CD14-positive monocyte (primary cell): ENCODE measurements at regions of chr16 and their contacts with region 1.

Region 1: DNA sequence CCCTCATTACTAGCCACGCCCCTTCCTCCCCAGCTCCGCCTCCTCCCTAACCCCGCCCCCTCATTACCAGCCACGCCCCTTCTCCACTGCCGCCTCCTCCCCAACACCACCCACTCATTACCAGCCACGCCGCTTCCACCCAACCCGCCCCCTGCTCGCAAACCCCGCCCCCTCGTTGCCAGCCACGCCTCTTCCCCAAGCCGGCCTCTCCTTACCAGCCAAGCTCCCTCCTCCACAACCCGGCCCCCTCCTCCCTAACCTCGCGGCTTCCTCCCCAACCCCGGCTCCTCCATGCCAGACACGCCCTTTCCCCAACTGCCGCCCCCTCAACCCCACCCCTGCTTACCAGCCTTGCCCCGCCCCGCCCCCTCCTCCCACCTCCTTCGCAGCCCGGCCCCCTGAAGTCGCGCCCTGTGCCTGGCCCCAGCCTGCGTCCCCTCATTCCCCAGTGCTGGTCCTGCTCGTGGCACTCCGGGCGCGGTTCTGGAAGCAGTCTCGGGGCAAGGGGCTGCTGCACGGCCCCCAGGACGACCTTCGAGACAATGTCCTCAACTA is 7.2 kb downstream of the SLC22A31 start:
- DNase-seq: peak in 2 of 3 donors; percentile 26 to 54
- H3K4me3 ChIP-seq: no peak overlapping the region
- H3K4me3 Mint-ChIP-seq: no peak overlapping the region
- H3K27ac ChIP-seq: no peak overlapping the region
- H3K27ac Mint-ChIP-seq: no peak overlapping the region
- H3K4me1 ChIP-seq: peaks cover 5 to 8% of the 10 kb centered on the region in 2 donors
- H3K4me1 Mint-ChIP-seq: no peaks in the 10 kb centered on the region
- H3K27me3 ChIP-seq: peaks cover 0 to 16% of the 10 kb centered on the region in 2 donors
- H3K27me3 Mint-ChIP-seq: peaks cover 17 to 30% (median 27%) of the 10 kb centered on the region in 3 donors
- CTCF ChIP-seq: no peak

Region 2: GRCh38 chr16:88452482-88453216 is 740.4 kb before region 1 on chr16:
- intact Hi-C with region 1: loop called in 1 of 2 experiments (anchors 5 kb)
- DNase-seq: peak; percentile 91 to 95 (median 94)
- H3K4me3 ChIP-seq: peak overlapping the region; percentile 38 to 83 (median 65)
- H3K4me3 Mint-ChIP-seq: peak overlapping the region; percentile 79 to 87
- H3K27ac ChIP-seq: peak overlapping the region; percentile 58 to 75
- H3K27ac Mint-ChIP-seq: peak overlapping the region; percentile 57 to 94 (median 82)
- H3K4me1 ChIP-seq: peaks cover 46 to 60% of the 10 kb centered on the region in 2 donors
- H3K4me1 Mint-ChIP-seq: peaks cover 44% of the 10 kb centered on the region
- H3K27me3 ChIP-seq: peaks cover 27 to 59% of the 10 kb centered on the region in 2 donors
- H3K27me3 Mint-ChIP-seq: peaks cover 52 to 86% (median 57%) of the 10 kb centered on the region in 3 donors
- CTCF ChIP-seq: no peak

Region 3: DNA sequence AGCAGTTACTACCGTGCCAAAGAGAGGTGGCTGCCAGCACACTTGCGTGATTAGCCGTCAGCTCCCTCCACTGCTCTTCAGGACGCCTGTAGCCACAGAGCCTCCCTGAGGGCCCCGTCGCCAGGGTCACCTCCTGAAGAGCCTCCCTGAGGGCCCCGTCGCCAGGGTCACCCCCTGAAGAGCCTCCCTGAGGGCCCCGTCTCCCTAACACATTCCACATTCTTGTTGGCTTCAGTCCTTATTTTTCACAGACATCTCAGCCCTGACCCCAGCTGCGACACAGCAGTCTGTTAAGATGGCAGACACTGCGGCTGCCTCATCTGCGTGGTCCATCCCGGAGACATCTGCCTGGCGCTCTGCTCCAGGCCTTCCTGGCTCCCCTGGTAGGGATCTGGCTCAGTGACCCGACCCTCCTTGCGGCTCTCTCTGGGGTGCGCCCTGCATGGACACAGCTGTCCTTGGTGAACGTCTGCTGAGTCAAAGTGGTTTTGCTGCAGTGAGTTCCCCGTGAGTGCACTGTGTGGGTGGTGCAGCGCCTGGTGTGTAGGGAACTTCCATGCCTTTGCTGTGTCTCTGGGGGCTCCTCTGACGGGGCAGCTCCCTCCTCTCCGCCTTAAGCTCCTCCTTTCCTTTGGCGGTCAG is 88.0 kb before region 1 on chr16:
- intact Hi-C with region 1: loop called in 1 of 2 experiments (anchors 10 kb)
- DNase-seq: no peak
- H3K4me3 ChIP-seq: no peak overlapping the region
- H3K4me3 Mint-ChIP-seq: no peak overlapping the region
- H3K27ac ChIP-seq: no peak overlapping the region
- H3K27ac Mint-ChIP-seq: peak overlapping the region in 1 of 7 donors; percentile 34
- H3K4me1 ChIP-seq: peaks cover under 1 to 8% of the 10 kb centered on the region in 2 donors
- H3K4me1 Mint-ChIP-seq: peaks cover 11% of the 10 kb centered on the region
- H3K27me3 ChIP-seq: no peaks in the 10 kb centered on the region
- H3K27me3 Mint-ChIP-seq: peaks cover 0 to 2% (median 1%) of the 10 kb centered on the region in 3 donors
- CTCF ChIP-seq: no peak

Region 4: GRCh38 chr16:89150090-89150835 is 42.8 kb before region 1 on chr16:
- intact Hi-C with region 1: no loop called
- DNase-seq: no peak
- H3K4me3 ChIP-seq: no peak overlapping the region
- H3K4me3 Mint-ChIP-seq: no peak overlapping the region
- H3K27ac ChIP-seq: no peak overlapping the region
- H3K27ac Mint-ChIP-seq: peak overlapping the region in 3 of 7 donors; percentile 2 to 57 (median 37)
- H3K4me1 ChIP-seq: no peaks in the 10 kb centered on the region
- H3K4me1 Mint-ChIP-seq: peaks cover 6% of the 10 kb centered on the region
- H3K27me3 ChIP-seq: no peaks in the 10 kb centered on the region
- H3K27me3 Mint-ChIP-seq: peaks cover 1 to 8% (median 5%) of the 10 kb centered on the region in 3 donors
- CTCF ChIP-seq: no peak

Region 5: DNA sequence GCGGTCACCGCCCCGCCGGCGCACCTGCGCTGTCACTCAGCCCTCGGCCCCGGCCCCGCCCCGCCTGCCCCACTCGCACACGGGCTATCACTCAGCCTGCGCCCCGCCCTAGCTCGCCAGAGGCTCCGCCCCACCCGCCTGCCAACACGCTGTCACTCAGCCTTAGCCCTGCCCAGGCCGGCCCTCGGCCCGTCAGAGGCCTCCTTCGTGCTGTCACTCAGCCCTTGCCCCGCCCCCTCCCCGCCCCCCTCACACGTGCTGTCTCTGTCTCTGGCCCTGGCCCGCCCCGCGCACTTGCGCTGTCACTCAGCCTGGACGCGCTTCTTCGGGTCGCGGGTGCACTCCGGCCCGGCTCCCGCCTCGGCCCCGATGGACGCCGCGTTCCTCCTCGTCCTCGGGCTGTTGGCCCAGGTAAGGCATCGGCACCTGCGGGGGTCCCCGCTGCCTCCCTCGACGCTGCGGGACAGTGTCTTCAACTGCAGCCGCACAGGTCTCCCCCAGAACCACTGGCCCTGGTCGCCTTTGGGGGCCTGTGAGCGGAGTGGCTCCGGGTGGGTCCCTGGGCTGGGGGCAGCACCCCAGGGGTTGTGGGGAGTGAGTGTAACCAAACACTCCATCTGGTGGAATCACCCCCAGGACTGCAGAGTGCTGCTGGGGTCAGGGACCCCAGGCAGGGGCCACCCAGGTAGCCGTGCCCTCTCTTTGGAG is 21.5 kb before region 1 on chr16 and contains the start of gene CDH15:
- intact Hi-C with region 1: loop called in 1 of 2 experiments (anchors 2 kb)
- DNase-seq: peak; percentile 88 to 95 (median 95)
- H3K4me3 ChIP-seq: peak within 1 kb of the TSS in 1 of 3 experiments; percentile 44
- H3K4me3 Mint-ChIP-seq: peak within 1 kb of the TSS; percentile 51 to 86
- H3K27ac ChIP-seq: no peak within 1 kb of the TSS
- H3K27ac Mint-ChIP-seq: peak within 1 kb of the TSS in 3 of 7 donors; percentile 33 to 75 (median 51)
- H3K4me1 ChIP-seq: peaks cover 18 to 24% of the 10 kb centered on the region in 2 donors
- H3K4me1 Mint-ChIP-seq: peaks cover 6% of the 10 kb centered on the region
- H3K27me3 ChIP-seq: peaks cover 0 to 40% of the 10 kb centered on the region in 2 donors
- H3K27me3 Mint-ChIP-seq: peaks cover 8 to 61% (median 17%) of the 10 kb centered on the region in 3 donors
- CTCF ChIP-seq: no peak
- polyA plus RNA-seq, gene CDH15: not detected

Region 6: DNA sequence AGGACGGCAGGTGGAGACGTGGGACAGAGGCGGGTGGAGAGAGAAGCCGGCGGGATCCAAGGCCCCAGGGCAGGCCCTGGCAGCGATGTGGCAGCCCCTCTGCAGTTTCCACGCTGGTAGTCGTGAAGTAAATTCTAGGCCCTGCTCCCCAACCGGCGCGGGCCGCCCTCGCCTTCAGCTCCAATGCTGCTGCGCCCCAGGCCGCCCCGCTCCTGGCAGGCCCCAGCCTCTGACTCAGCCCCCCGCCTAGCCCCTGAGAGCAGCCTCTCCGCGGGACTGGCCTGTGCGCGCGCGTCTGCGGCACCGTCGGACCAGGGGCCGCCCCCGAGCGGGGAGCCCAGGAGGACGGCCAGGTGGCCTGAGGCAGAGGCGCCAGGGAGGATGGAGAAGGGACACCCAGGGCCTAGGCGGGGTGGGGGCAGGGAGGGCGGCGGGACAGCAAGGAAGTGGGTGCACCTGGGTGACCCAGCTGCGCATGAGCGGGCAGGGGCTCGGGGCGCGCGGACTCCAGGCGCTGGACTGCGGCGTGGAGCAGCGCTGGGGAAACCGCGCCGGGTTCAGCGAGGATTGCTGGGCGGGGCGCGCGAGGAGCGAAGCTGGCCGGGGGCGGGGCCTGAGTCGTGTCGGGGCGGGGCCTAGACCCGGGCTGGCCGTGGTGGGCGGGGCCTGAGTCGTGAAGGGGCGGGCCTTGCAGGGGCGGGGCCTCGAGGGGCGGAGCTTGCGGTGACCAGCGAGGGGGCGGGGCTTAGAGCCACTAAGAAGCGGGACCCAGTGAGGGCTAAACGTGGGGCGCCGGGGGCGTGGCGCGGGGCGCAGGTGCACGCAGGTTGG is 54.0 kb after region 1 on chr16:
- intact Hi-C with region 1: loop called in 1 of 2 experiments (anchors 2 kb)
- DNase-seq: peak; percentile 78 to 86 (median 78)
- H3K4me3 ChIP-seq: peak overlapping the region in 2 of 3 experiments; percentile 19 to 68
- H3K4me3 Mint-ChIP-seq: peak overlapping the region; percentile 67 to 83
- H3K27ac ChIP-seq: no peak overlapping the region
- H3K27ac Mint-ChIP-seq: peak overlapping the region in 1 of 7 donors; percentile 50
- H3K4me1 ChIP-seq: peaks cover 7 to 18% of the 10 kb centered on the region in 2 donors
- H3K4me1 Mint-ChIP-seq: peaks cover 7% of the 10 kb centered on the region
- H3K27me3 ChIP-seq: peaks cover 0 to 20% of the 10 kb centered on the region in 2 donors
- H3K27me3 Mint-ChIP-seq: peaks cover 27 to 42% (median 39%) of the 10 kb centered on the region in 3 donors
- CTCF ChIP-seq: no peak